Activated B cell treated with CpG ODN at 0.5 μM for 24 hours (primary cell): ENCODE measurements at regions of chr2 and their contacts with region 1.

Region 1: DNA sequence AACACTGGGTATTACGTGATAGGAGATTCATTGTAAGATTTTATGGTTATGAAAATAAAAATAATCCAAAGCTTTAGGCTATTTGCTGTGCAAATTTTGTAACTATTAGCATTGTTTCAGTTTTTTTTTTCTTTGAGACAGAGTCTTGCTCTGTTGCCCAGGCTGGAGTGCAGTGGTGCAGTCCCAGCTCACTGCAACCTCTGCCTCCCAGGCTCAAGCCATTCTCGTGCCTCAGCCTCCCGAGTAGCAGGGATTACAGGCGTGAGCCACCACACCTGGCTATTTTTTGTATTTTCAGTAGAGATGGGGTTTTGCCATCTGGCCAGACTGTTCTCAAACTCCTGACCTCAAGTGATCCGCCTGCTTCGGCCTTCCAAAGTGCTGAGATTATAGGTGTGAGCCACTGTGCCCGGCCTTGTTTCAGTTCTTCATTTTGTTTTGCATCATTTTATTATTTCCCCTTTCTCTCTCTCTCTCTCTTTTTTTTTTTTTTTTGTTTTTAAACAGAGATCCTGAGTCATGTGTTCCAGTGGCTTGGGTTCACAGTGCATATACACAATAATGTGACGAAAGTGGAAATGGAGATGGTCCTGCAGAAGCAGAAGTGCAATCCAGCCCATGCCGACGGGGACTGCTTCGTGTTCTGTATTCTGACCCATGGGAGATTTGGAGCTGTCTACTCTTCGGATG is 25.8 kb downstream of the CASP10 start:
- DNase-seq: peak; percentile 40
- ATAC-seq: peak; percentile 83
- H3K4me3 Mint-ChIP-seq: peak overlapping the region; percentile 53
- H3K27ac Mint-ChIP-seq: peak overlapping the region; percentile 89
- H3K4me1 Mint-ChIP-seq: peaks cover 43% of the 10 kb centered on the region
- H3K27me3 Mint-ChIP-seq: no peaks in the 10 kb centered on the region
- CTCF ChIP-seq: no peak

Region 2: DNA sequence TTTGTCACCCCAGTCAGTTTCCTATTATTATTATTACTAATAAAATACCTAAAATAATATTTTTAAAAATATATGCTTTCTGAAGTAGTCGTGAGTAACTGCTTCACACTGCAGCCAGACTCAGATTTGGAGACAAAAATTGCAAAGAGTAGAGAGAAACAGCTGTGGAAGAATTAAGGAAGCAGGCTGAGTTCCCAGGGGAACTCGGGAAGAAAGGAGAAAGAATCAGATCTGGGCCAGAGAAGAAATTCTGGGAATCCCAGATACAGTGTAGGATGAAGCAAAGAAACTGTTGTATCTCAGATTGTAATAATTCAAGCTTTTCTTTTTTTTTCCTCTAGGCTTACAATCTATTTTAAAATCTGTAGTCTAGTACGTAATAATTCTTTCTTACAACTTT is 1540.1 kb before region 1 on chr2:
- CTCF ChIA-PET with region 1: no interaction called
- POLR2A ChIA-PET with region 1: no interaction called
- intact Hi-C with region 1: no loop called
- DNase-seq: no peak
- ATAC-seq: no peak
- H3K4me3 Mint-ChIP-seq: no peak overlapping the region
- H3K27ac Mint-ChIP-seq: no peak overlapping the region
- H3K4me1 Mint-ChIP-seq: no peaks in the 10 kb centered on the region
- H3K27me3 Mint-ChIP-seq: peaks cover 4% of the 10 kb centered on the region
- CTCF ChIP-seq: no peak

Region 3: DNA sequence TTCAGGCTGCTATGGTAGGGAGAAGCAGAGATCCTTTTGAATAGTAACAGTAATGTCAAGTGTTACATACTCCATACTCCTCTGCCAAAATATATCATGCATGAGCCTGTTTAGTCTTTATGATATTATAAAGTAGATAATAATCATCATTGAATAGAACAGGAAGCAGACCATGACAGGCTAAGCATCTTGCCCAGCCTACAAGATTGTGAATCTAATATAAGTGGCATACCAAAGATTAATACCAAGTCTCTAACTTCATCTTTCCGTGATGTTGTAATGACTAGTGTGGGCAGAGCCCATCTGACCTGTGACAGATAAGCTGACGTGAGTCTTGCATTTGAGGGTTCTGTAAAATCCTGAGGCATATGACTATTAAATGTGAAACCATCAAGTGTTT is 123.8 kb before region 1 on chr2:
- CTCF ChIA-PET with region 1: no interaction called
- POLR2A ChIA-PET with region 1: no interaction called
- intact Hi-C with region 1: no loop called
- DNase-seq: no peak
- ATAC-seq: no peak
- H3K4me3 Mint-ChIP-seq: no peak overlapping the region
- H3K27ac Mint-ChIP-seq: no peak overlapping the region
- H3K4me1 Mint-ChIP-seq: no peaks in the 10 kb centered on the region
- H3K27me3 Mint-ChIP-seq: no peaks in the 10 kb centered on the region
- CTCF ChIP-seq: no peak

Region 4: DNA sequence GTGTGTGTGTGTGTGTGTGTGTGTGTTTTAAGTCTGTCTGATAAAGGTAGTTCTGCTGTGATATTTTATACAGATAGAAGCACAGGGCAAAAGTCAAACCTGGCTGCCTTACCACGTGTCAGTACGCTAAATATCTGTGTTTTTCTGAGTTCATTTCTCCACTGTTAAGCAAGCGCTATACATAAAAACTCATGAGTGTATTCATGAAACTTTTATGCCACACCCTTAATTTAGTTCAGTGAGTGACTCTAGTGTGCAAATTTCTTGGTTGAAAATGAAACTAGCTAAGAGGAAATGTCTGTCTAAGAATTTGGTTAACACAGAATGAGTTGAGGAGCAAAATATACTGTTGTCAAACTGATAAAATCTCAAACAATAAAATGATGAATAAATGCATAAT is 14.6 kb before region 1 on chr2:
- CTCF ChIA-PET with region 1: interaction called, 6 read pairs
- POLR2A ChIA-PET with region 1: interaction called, 21 read pairs
- intact Hi-C with region 1: loop called (anchors 1 kb)
- DNase-seq: no peak
- ATAC-seq: peak; percentile 92
- H3K4me3 Mint-ChIP-seq: peak overlapping the region; percentile 60
- H3K27ac Mint-ChIP-seq: peak overlapping the region; percentile 75
- H3K4me1 Mint-ChIP-seq: peaks cover 70% of the 10 kb centered on the region
- H3K27me3 Mint-ChIP-seq: no peaks in the 10 kb centered on the region
- CTCF ChIP-seq: no peak

Region 5: GRCh38 chr2:201220102-201220570 is 11.4 kb after region 1 on chr2:
- CTCF ChIA-PET with region 1: interaction called, 3 read pairs
- POLR2A ChIA-PET with region 1: interaction called, 16 read pairs
- intact Hi-C with region 1: loop called (anchors 1 kb)
- DNase-seq: no peak
- ATAC-seq: peak; percentile 42
- H3K4me3 Mint-ChIP-seq: no peak overlapping the region
- H3K27ac Mint-ChIP-seq: peak overlapping the region; percentile 47
- H3K4me1 Mint-ChIP-seq: peaks cover 20% of the 10 kb centered on the region
- H3K27me3 Mint-ChIP-seq: no peaks in the 10 kb centered on the region
- CTCF ChIP-seq: no peak